ENCODE measurements at regions of chr22 and their contacts with region 1.

Region 1: GRCh38 chr22:21972293-21972779 is 10.3 kb downstream of the TOP3B start:
- DNase-seq: peak; percentile 66
- H3K4me3 ChIP-seq: no peak overlapping the region
- H3K27ac ChIP-seq: no peak overlapping the region
- H3K4me1 ChIP-seq: no peaks in the 10 kb centered on the region
- CTCF ChIP-seq: peak; percentile 97

Region 2: DNA sequence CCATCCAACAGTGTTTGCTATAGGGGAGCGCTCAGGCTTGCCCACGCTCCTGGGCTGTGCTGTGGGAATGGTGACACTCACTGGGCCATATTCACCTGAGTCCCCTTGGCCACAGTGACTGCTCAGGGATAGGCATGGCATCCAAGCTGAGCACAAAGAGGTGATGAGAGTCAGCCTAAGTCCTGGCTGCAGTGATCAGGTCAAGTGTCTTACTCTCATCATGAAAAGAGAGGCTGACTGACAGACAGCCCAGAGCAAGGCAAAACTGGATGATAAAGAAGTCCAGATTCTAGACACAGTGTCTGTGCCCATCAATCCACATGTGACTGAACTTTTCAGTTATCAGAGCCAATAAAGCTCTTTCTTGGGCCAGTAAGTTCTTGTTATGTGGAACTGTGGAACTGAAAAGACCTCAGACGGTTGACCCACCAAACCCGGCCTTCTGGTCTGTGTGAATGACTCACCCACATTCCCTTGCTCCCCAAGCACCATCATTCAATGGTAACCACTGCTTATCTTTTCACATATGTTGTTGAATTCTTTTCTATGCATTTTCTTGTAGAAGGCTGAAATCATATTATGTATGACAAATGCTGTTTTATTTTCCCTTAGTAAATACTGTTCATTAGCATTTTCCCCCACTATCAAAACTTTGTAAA is 193.5 kb before region 1 on chr22:
- CTCF ChIA-PET with region 1: no interaction called
- POLR2A ChIA-PET with region 1: no interaction called
- intact Hi-C with region 1: no loop called
- DNase-seq: no peak
- H3K4me3 ChIP-seq: no peak overlapping the region
- H3K27ac ChIP-seq: peak overlapping the region; percentile 88
- H3K4me1 ChIP-seq: peaks cover 60% of the 10 kb centered on the region
- CTCF ChIP-seq: no peak

Region 3: DNA sequence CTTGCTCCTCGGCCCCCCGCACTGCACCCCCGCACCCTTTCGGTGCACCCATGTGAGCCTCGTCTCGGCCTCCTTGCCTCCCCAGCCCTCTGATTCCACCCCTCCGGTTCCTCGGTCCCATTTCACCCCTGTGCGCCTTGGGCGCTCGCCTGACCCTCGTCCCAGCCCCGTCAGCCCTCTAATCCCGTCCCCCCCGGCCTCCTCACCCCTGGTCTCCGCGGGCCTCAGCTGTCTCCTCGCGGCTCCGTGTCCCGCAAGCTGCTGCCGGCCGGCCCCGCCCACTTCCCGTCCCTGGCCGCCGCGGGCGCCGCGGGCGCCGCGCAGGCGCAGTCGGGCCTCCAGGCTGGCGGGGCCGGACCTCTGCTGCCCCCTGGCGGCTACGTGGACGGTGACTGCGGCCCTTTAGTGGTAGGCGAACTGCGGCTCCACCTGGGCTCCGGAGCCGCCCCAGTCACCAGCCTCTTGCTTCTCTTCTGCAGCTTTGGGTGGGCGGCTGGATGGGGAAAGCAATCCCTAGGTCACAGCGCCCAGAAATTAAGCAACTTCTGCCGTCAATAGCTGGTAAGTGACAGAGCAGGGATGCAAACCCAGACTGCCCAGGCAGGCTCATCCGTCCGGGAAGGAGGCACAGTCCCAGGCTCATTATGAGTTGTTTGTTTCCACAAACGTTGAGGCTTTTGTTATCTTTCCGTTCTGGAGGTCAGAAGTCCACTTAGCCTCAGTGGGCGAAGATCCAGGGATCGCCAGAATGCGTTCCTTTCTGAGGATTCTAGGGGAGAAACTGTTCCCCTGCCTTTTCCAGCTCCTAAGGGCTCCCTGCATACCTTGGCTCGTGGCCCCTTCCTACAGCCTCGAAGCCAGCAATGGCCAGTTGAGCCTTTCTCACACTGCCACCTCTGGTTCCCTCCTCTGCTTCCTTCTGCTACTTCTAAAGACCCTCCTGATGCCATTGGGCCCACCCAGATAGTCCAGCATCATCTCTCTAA is 19.5 kb before region 1 on chr22 and contains the start of gene PPM1F:
- CTCF ChIA-PET with region 1: no interaction called
- POLR2A ChIA-PET with region 1: no interaction called
- intact Hi-C with region 1: no loop called
- DNase-seq: peak; percentile 89
- H3K4me3 ChIP-seq: peak within 1 kb of the TSS; percentile 74
- H3K27ac ChIP-seq: no peak within 1 kb of the TSS
- H3K4me1 ChIP-seq: peaks cover 6% of the 10 kb centered on the region
- CTCF ChIP-seq: peak; percentile 90
- total RNA-seq, gene PPM1F: 21.7 and 35.4 TPM in 2 replicates

Region 4: DNA sequence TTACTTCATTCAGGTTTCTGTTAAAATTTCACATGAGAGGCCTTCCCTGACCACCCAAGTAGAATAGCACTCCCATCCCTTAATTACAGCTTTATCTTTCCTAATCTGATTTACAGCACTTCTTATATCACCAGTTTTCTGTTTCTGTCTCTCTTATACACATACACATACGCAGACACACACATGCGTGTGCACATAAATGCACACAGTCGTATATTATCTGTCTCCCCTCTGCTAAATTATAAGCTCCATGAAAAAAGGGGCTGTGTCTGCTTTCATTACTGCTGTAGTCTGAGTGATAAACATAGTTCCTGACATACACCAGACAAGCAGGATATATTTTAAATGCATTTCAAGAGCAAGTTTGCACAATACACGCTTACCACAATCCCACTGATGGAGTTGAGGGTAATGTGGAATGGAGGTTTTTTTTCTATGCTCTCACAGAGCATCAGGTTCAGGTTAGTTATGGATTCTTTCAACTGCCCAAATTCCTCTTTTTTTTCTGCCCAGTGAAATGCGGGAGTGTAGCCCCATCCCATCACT is 23.9 kb after region 1 on chr22:
- CTCF ChIA-PET with region 1: no interaction called
- POLR2A ChIA-PET with region 1: no interaction called
- intact Hi-C with region 1: no loop called
- DNase-seq: no peak
- H3K4me3 ChIP-seq: no peak overlapping the region
- H3K27ac ChIP-seq: no peak overlapping the region
- H3K4me1 ChIP-seq: no peaks in the 10 kb centered on the region
- CTCF ChIP-seq: no peak

Region 5: DNA sequence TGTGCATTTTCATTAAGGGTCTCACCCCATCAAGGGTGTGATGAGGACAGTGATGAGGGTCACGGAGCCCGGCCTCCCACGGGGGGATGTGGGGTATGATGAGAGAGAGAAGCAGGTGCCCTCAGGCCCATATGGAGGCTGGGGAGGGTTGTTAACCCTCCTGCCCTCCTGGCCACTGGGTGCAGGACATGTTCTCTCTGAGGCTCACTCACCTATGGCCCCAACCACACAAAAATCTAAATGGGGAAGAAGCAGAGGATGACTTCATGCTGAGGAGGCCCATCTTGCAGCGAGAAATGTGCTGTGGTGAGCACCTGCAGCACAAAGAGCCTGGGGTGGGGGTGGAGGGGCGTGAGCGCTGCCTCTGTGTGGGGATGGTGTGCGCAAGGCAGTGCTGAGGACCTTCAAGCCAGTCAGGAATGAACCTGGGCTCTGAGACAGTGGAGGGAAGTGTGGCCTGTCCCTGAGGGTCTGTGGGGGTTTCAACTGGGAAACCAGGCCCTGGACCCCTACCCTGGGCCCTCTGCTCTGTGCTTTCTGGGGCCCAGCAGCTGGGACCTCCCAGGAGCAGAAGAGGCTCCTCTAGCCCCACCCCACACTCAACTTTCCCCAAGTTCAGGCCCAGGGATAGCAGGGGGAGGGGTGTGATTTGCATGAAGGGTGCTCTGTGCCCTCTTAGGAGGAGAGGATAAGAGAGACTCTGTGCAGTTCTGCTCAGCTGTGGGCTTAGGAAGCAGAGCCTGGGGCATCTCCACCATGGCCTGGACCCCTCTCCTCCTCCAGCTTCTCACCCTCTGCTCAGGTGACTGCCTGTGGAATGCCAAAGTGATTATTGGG is 53.2 kb after region 1 on chr22:
- CTCF ChIA-PET with region 1: no interaction called
- POLR2A ChIA-PET with region 1: no interaction called
- intact Hi-C with region 1: loop called (anchors 2 kb)
- DNase-seq: peak; percentile 88
- H3K4me3 ChIP-seq: peak overlapping the region; percentile 71
- H3K27ac ChIP-seq: peak overlapping the region; percentile 93
- H3K4me1 ChIP-seq: peaks cover 88% of the 10 kb centered on the region
- CTCF ChIP-seq: no peak

Region 6: GRCh38 chr22:22110548-22111266 is 138.4 kb after region 1 on chr22:
- CTCF ChIA-PET with region 1: no interaction called
- POLR2A ChIA-PET with region 1: no interaction called
- intact Hi-C with region 1: loop called (anchors 1 kb)
- DNase-seq: peak; percentile 95
- H3K4me3 ChIP-seq: peak overlapping the region; percentile 38
- H3K27ac ChIP-seq: peak overlapping the region; percentile 64
- H3K4me1 ChIP-seq: peaks cover 34% of the 10 kb centered on the region
- CTCF ChIP-seq: peak; percentile 89

Region 7: DNA sequence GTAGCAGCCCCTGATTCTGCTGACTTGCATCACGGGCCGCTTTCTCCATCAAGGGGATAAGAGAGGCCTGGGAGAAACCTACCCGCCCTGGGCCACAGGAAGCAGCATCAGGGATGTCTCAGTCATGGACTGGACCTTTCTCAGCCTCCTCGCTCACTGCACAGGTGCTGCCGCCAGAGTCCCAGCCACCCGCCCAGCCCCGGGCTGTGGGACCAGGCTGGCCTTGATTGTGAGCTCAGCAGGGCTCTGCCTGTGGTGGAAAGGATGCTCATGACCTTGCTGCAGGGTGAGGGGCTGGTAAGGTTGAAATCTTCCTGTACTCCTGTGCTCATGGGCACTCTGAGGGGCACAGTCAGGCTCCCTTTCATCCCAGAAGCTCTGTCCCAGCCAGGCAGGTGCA is 646.1 kb after region 1 on chr22:
- CTCF ChIA-PET with region 1: no interaction called
- POLR2A ChIA-PET with region 1: no interaction called
- intact Hi-C with region 1: no loop called
- DNase-seq: no peak
- H3K4me3 ChIP-seq: no peak overlapping the region
- H3K27ac ChIP-seq: no peak overlapping the region
- H3K4me1 ChIP-seq: peaks cover 10% of the 10 kb centered on the region
- CTCF ChIP-seq: no peak

Measured in OCI-LY7 (cell line).